ENCODE measurements at regions of chr2 and their contacts with region 1.

Region 1: DNA sequence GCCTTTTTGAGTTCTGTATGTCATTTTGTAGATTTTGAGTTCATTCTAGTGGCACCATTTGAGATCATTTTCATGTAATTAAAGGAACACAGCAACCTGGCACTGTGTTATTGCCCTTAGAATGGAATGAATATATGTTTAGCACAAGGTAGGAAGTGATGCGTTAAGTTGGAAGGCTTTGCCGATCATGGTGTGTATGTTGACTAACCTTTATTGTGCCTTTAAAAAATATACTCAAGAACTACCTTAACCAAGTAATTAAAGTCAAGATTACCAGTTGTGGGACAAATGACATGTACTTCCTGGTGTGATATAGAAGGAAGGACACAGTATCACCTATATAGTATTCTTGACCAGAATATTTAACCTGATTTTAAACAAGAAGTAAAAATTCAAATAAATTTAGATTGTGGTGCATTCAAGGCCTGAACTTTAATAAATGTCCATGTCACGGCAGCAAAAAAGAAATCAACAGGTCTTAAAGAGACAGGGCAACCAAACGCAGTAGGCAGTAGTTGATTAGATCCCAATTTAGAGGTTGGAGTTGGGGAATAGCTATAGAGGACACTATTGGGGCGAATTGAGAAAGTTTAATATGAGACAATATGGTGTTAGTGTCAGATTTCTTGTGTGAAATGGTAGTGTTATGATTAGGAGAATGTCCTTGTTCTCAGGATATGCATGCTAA is 68.6 kb downstream of the MSH2 start:
- DNase-seq: no peak
- ATAC-seq: no peak
- H3K4me3 ChIP-seq: no peak overlapping the region
- H3K27ac ChIP-seq: no peak overlapping the region
- H3K4me1 ChIP-seq: no peaks in the 10 kb centered on the region
- H3K27me3 ChIP-seq: no peaks in the 10 kb centered on the region
- CTCF ChIP-seq: no peak

Region 2: DNA sequence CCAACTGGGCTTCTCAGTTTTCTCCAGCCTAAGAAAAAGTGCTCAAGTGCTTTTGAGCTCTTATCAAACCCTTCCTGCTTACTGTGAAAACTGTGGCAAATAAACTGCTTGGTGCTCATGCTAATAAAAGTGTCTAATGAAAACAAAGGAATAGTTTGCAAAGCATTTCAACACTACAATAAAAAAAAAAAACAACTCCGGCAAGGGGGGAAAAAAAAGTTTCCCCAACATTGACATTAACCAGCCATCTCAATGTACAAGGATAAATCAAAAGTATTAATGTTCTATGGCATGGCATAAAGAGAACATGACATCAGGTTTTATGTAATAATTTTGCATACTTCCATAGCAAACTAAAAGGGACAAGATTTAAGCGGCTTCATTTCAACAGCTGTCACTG is 301.8 kb before region 1 on chr2:
- CTCF ChIA-PET with region 1: no interaction called
- POLR2A ChIA-PET with region 1: interaction called, 11 read pairs
- in situ Hi-C with region 1: no loop called
- intact Hi-C with region 1: no loop called
- DNase-seq: no peak
- ATAC-seq: no peak
- H3K4me3 ChIP-seq: peak overlapping the region in 1 of 2 experiments; percentile 69; a peak in 1 of 4 replicates
- H3K27ac ChIP-seq: peak overlapping the region; percentile 77
- H3K4me1 ChIP-seq: peaks cover 59% of the 10 kb centered on the region
- H3K27me3 ChIP-seq: no peaks in the 10 kb centered on the region
- CTCF ChIP-seq: no peak

Region 3: GRCh38 chr2:47483191-47483590 is 11.6 kb after region 1 on chr2:
- CTCF ChIA-PET with region 1: interaction called, 12 read pairs
- POLR2A ChIA-PET with region 1: no interaction called
- in situ Hi-C with region 1: no loop called
- intact Hi-C with region 1: no loop called
- DNase-seq: no peak
- ATAC-seq: no peak
- H3K4me3 ChIP-seq: no peak overlapping the region
- H3K27ac ChIP-seq: no peak overlapping the region
- H3K4me1 ChIP-seq: no peaks in the 10 kb centered on the region
- H3K27me3 ChIP-seq: no peaks in the 10 kb centered on the region
- CTCF ChIP-seq: no peak

Region 4: GRCh38 chr2:47664817-47665216 is 193.2 kb after region 1 on chr2:
- CTCF ChIA-PET with region 1: no interaction called
- POLR2A ChIA-PET with region 1: no interaction called
- in situ Hi-C with region 1: no loop called
- intact Hi-C with region 1: no loop called
- DNase-seq: no peak
- ATAC-seq: peak; percentile 63; the same call in 1 of the 2 replicates
- H3K4me3 ChIP-seq: no peak overlapping the region
- H3K27ac ChIP-seq: no peak overlapping the region
- H3K4me1 ChIP-seq: no peaks in the 10 kb centered on the region
- H3K27me3 ChIP-seq: no peaks in the 10 kb centered on the region
- CTCF ChIP-seq: peak; percentile 52; the same call in 1 of the 2 replicates